Activated naive CD4-positive, alpha-beta T cell treated with anti-CD3 and anti-CD28 coated beads for 36 hours (primary cell): ENCODE measurements at regions of chr2 and their contacts with region 1.

Region 1: GRCh38 chr2:55617175-55618024 is at the start of gene PPP4R3B:
- DNase-seq: peak; percentile 99
- H3K4me3 Mint-ChIP-seq: no peak within 1 kb of the TSS
- H3K27ac Mint-ChIP-seq: no peak within 1 kb of the TSS
- H3K4me1 Mint-ChIP-seq: peaks cover 21% of the 10 kb centered on the region
- H3K27me3 Mint-ChIP-seq: no peaks in the 10 kb centered on the region
- total RNA-seq, gene PPP4R3B: 55.4 to 57.2 TPM

Region 2: GRCh38 chr2:54115284-54116137 is 1501.9 kb before region 1 on chr2 and contains the start of gene ACYP2:
- CTCF ChIA-PET with region 1: no interaction called
- intact Hi-C with region 1: loop called (anchors 1 kb)
- DNase-seq: peak; percentile 95
- H3K4me3 Mint-ChIP-seq: peak within 1 kb of the TSS; percentile 97
- H3K27ac Mint-ChIP-seq: peak within 1 kb of the TSS; percentile 100
- H3K4me1 Mint-ChIP-seq: peaks cover 11% of the 10 kb centered on the region
- H3K27me3 Mint-ChIP-seq: no peaks in the 10 kb centered on the region
- total RNA-seq, gene ACYP2: 6.8 to 7.3 TPM

Region 3: GRCh38 chr2:54899576-54900200 is 717.7 kb before region 1 on chr2:
- CTCF ChIA-PET with region 1: no interaction called
- intact Hi-C with region 1: loop called (anchors 5 kb)
- DNase-seq: no peak
- H3K4me3 Mint-ChIP-seq: no peak overlapping the region
- H3K27ac Mint-ChIP-seq: no peak overlapping the region
- H3K4me1 Mint-ChIP-seq: peaks cover 27% of the 10 kb centered on the region
- H3K27me3 Mint-ChIP-seq: no peaks in the 10 kb centered on the region

Region 4: GRCh38 chr2:55232084-55232862 is 385.1 kb before region 1 on chr2 and contains the starts of genes CLHC1 and RPS27A:
- CTCF ChIA-PET with region 1: no interaction called
- intact Hi-C with region 1: loop called (anchors 1 kb)
- DNase-seq: peak; percentile 94
- H3K4me3 Mint-ChIP-seq: peak within 1 kb of the TSS; percentile 97
- H3K27ac Mint-ChIP-seq: peak within 1 kb of the TSS; percentile 95
- H3K4me1 Mint-ChIP-seq: peaks cover 52% of the 10 kb centered on the region
- H3K27me3 Mint-ChIP-seq: no peaks in the 10 kb centered on the region
- total RNA-seq, gene CLHC1: 2.4 to 3.1 TPM
- total RNA-seq, gene RPS27A: 1,468 to 1,556 TPM

Region 5: DNA sequence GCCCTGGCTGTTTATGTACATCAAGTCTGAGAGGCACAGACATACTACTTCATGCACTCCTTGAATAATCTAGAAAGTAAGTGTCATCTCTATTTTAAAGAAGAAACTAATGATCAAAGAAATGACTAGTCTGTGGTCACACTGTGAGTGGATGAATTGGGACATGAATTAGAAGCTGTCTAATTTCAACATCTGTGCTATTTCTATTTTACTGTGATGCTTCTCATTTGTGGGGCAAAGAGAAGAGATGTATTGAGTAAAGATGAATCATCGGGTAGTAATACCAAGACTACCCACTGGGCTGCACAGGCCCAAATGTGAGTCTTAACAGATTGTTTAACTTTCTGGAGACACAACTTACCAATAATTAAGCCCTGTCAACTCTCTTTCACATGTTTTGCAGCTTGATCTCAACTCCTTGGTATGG is 305.9 kb before region 1 on chr2:
- CTCF ChIA-PET with region 1: no interaction called
- intact Hi-C with region 1: loop called (anchors 1 kb)
- DNase-seq: peak; percentile 63
- H3K4me3 Mint-ChIP-seq: no peak overlapping the region
- H3K27ac Mint-ChIP-seq: peak overlapping the region; percentile 57
- H3K4me1 Mint-ChIP-seq: peaks cover 25% of the 10 kb centered on the region
- H3K27me3 Mint-ChIP-seq: no peaks in the 10 kb centered on the region

Region 6: GRCh38 chr2:55530539-55531081 is 86.8 kb before region 1 on chr2:
- CTCF ChIA-PET with region 1: interaction called, 3 read pairs
- intact Hi-C with region 1: loop called (anchors 2 kb)
- DNase-seq: peak; percentile 30
- H3K4me3 Mint-ChIP-seq: no peak overlapping the region
- H3K27ac Mint-ChIP-seq: peak overlapping the region; percentile 86
- H3K4me1 Mint-ChIP-seq: peaks cover 17% of the 10 kb centered on the region
- H3K27me3 Mint-ChIP-seq: no peaks in the 10 kb centered on the region

Region 7: DNA sequence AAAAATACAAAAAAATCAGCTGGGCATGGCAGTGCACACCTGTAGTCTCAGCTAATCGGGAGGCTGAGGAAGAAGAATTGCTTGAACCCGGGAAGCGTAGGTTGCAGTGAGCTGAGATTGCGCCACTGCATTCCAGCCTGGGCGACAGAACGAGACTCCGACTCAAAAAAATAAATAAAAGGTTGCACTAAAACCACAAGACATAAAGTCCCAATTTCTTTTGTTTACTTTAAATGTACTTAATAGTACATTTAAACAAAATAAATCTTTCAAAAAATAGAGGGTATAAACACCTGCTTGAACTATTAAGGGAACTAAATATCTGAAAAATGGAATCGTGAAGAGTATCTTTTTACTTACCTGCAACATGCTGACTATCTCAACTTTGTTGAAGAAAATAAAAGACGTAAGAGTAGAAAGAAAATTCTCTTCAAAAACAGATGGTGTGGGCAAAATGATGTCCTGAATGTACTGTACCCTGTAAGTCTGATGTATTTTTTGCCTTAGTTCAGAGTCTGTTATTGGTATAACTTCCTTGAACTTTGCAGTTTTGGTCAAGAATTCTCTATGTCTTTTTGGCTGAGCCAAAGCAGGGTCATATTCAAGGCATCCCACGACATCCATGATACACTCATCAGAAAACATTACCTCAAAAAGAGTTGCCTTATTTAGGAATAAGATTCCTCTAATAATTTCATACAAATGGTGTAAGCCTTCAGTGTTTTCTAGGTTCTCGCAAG is 19.2 kb before region 1 on chr2:
- CTCF ChIA-PET with region 1: no interaction called
- intact Hi-C with region 1: no loop called
- DNase-seq: no peak
- H3K4me3 Mint-ChIP-seq: no peak overlapping the region
- H3K27ac Mint-ChIP-seq: no peak overlapping the region
- H3K4me1 Mint-ChIP-seq: peaks cover 33% of the 10 kb centered on the region
- H3K27me3 Mint-ChIP-seq: no peaks in the 10 kb centered on the region

Region 8: DNA sequence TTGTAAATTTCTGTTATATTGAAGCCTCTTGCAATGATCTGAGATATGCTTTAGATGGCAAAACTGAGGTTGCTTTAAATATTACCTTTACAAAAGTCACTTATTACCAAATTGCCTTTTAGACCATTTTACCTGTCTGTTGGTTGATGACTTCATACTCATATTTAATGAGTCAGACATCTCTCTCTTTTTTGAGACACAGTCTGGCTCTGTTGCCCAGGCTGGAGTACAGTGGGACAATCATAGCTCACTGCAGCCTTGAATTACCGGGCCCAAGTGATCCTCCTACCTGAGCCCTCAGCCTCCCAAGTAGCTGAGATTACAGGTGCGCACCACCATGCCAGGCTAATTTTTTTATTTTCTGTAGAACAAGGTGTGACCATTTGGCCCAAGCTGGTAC is 11.5 kb after region 1 on chr2:
- CTCF ChIA-PET with region 1: no interaction called
- intact Hi-C with region 1: no loop called
- DNase-seq: no peak
- H3K4me3 Mint-ChIP-seq: no peak overlapping the region
- H3K27ac Mint-ChIP-seq: no peak overlapping the region
- H3K4me1 Mint-ChIP-seq: peaks cover 24% of the 10 kb centered on the region
- H3K27me3 Mint-ChIP-seq: no peaks in the 10 kb centered on the region

Region 9: DNA sequence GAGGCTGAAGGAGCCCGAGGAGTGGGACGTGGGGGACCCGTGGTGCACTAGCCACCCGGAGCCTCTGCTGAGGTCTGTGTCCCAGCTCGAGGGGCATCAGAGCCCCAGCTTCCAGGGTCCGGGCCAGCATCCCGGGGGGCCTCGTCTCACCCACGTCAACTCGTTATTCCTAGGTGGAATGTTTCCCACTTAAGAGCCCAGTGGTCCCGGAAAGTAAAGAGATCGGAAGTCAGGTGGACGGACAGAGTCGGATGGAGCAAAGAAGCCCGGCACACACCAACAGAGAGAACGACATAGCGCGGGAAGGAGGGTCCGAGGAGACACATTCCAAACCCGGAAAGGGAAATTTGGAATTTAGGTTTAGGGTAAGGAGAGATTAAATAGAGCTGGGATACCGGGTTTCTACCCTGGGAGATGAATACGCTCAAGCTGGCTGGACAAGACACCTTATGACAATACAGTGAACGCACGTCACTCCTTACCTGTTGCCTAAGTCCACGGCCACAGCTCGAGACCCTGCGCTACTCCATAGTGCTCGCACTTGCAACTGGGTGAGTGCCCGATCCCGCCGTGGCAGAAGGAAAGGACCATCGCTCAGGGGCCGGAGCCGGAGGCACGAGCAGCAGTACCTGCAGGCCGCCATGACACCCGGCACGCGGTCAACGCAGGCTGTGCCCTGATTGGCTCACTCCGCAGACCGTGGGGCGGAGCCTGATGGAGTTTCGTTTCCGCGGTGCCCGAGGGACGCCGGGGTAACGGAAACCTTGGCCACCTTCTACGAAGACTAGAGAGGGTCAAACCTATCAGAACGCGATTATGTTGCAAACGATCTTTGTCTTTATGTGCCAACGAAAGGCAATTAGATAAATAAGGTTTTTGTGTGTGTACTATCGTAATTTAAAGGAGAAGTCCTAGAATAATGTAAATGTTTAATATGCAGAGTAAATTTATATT is 76.1 kb after region 1 on chr2 and contains the start of gene PNPT1:
- CTCF ChIA-PET with region 1: no interaction called
- intact Hi-C with region 1: loop called (anchors 1 kb)
- DNase-seq: peak; percentile 96
- H3K4me3 Mint-ChIP-seq: peak within 1 kb of the TSS; percentile 92
- H3K27ac Mint-ChIP-seq: peak within 1 kb of the TSS; percentile 86
- H3K4me1 Mint-ChIP-seq: peaks cover 34% of the 10 kb centered on the region
- H3K27me3 Mint-ChIP-seq: no peaks in the 10 kb centered on the region
- total RNA-seq, gene PNPT1: 54.1 to 60.7 TPM

Region 10: GRCh38 chr2:56191683-56192082 is 574.3 kb after region 1 on chr2:
- CTCF ChIA-PET with region 1: no interaction called
- intact Hi-C with region 1: no loop called
- DNase-seq: no peak
- H3K4me3 Mint-ChIP-seq: no peak overlapping the region
- H3K27ac Mint-ChIP-seq: no peak overlapping the region
- H3K4me1 Mint-ChIP-seq: no peaks in the 10 kb centered on the region
- H3K27me3 Mint-ChIP-seq: peaks cover 38% of the 10 kb centered on the region